ENCODE measurements at regions of chr15 and their contacts with region 1.

Region 1: DNA sequence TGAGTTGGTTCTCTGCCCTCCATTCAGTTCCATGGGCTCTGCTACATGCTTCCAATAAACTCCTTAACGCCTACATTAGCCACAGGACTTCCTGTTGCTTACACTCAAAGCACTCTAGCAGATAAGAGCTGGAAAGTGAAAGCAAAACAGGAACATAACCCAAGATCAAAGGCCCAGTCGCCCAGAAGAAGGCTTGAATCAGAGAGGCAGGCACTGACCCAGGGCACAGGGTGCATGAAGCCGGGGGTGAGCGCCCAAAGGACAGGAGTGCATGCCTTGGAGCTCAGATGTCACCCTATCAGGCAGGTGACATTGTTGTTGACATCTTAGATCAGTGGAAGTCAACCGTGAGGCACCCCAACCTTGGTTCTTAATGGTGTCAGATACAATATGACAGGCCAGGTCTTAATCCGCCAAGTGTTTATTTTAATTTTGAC is 235.1 kb downstream of the UACA start:
- DNase-seq: peak; percentile 74 to 80 (median 77)
- H3K4me3 ChIP-seq: peak overlapping the region; percentile 8 to 39
- H3K4me3 Mint-ChIP-seq: peak overlapping the region; percentile 69 to 85 (median 76)
- H3K27ac ChIP-seq: peak overlapping the region; percentile 32
- H3K27ac Mint-ChIP-seq: peak overlapping the region; percentile 74 to 97 (median 88)
- H3K4me1 ChIP-seq: peaks cover 56% of the 10 kb centered on the region
- H3K4me1 Mint-ChIP-seq: peaks cover 45 to 79% (median 61%) of the 10 kb centered on the region in 4 donors
- H3K27me3 ChIP-seq: no peaks in the 10 kb centered on the region
- H3K27me3 Mint-ChIP-seq: no peaks in the 10 kb centered on the region

Region 2: GRCh38 chr15:70210528-70210927 is 317.8 kb before region 1 on chr15:
- CTCF ChIA-PET with region 1: no interaction called
- POLR2A ChIA-PET with region 1: no interaction called
- intact Hi-C with region 1: no loop called
- DNase-seq: no peak
- H3K4me3 ChIP-seq: no peak overlapping the region
- H3K4me3 Mint-ChIP-seq: no peak overlapping the region
- H3K27ac ChIP-seq: no peak overlapping the region
- H3K27ac Mint-ChIP-seq: no peak overlapping the region
- H3K4me1 ChIP-seq: no peaks in the 10 kb centered on the region
- H3K4me1 Mint-ChIP-seq: no peaks in the 10 kb centered on the region
- H3K27me3 ChIP-seq: no peaks in the 10 kb centered on the region
- H3K27me3 Mint-ChIP-seq: no peaks in the 10 kb centered on the region

Region 3: GRCh38 chr15:70504299-70504951 is 23.9 kb before region 1 on chr15:
- CTCF ChIA-PET with region 1: no interaction called
- POLR2A ChIA-PET with region 1: interaction called, 22 read pairs
- intact Hi-C with region 1: no loop called
- DNase-seq: no peak
- H3K4me3 ChIP-seq: peak overlapping the region in 1 of 2 donors; percentile 2
- H3K4me3 Mint-ChIP-seq: peak overlapping the region in 7 of 8 donors; percentile 54 to 76 (median 59)
- H3K27ac ChIP-seq: no peak overlapping the region
- H3K27ac Mint-ChIP-seq: peak overlapping the region in 1 of 7 donors; percentile 8
- H3K4me1 ChIP-seq: peaks cover 62% of the 10 kb centered on the region
- H3K4me1 Mint-ChIP-seq: peaks cover 36 to 68% (median 51%) of the 10 kb centered on the region in 4 donors
- H3K27me3 ChIP-seq: no peaks in the 10 kb centered on the region
- H3K27me3 Mint-ChIP-seq: no peaks in the 10 kb centered on the region

Region 4: GRCh38 chr15:70512772-70513362 is 15.4 kb before region 1 on chr15:
- CTCF ChIA-PET with region 1: interaction called, 22 read pairs
- POLR2A ChIA-PET with region 1: interaction called, 5 read pairs
- intact Hi-C with region 1: no loop called
- DNase-seq: peak; percentile 55 to 67 (median 59)
- H3K4me3 ChIP-seq: no peak overlapping the region
- H3K4me3 Mint-ChIP-seq: no peak overlapping the region
- H3K27ac ChIP-seq: no peak overlapping the region
- H3K27ac Mint-ChIP-seq: peak overlapping the region in 1 of 7 donors; percentile 43
- H3K4me1 ChIP-seq: peaks cover 20% of the 10 kb centered on the region
- H3K4me1 Mint-ChIP-seq: peaks cover 9 to 28% (median 18%) of the 10 kb centered on the region in 4 donors
- H3K27me3 ChIP-seq: no peaks in the 10 kb centered on the region
- H3K27me3 Mint-ChIP-seq: no peaks in the 10 kb centered on the region

Measured in CD4-positive, alpha-beta memory T cell (primary cell).